CD8-positive, alpha-beta T cell (primary cell): ENCODE measurements at regions of chr2 and their contacts with region 1.

Region 1: GRCh38 chr2:172465417-172466334 is 38.3 kb downstream of the ITGA6 start:
- DNase-seq: peak; percentile 47 to 86 (median 76)
- ATAC-seq: peak; percentile 49
- H3K4me3 ChIP-seq: no peak overlapping the region
- H3K4me3 Mint-ChIP-seq: peak overlapping the region; percentile 6
- H3K27ac ChIP-seq: peak overlapping the region; percentile 24 to 66
- H3K27ac Mint-ChIP-seq: peak overlapping the region; percentile 94
- H3K4me1 ChIP-seq: peaks cover 53% of the 10 kb centered on the region
- H3K4me1 Mint-ChIP-seq: peaks cover 74% of the 10 kb centered on the region
- H3K27me3 ChIP-seq: no peaks in the 10 kb centered on the region
- H3K27me3 Mint-ChIP-seq: no peaks in the 10 kb centered on the region
- CTCF ChIP-seq: peak; percentile 94

Region 2: GRCh38 chr2:170843656-170844055 is 1622.0 kb before region 1 on chr2:
- CTCF ChIA-PET with region 1: no interaction called
- POLR2A ChIA-PET with region 1: no interaction called
- intact Hi-C with region 1: no loop called
- DNase-seq: peak in 2 of 9 experiments; percentile 25 to 40
- ATAC-seq: no peak
- H3K4me3 ChIP-seq: no peak overlapping the region
- H3K4me3 Mint-ChIP-seq: no peak overlapping the region
- H3K27ac ChIP-seq: no peak overlapping the region
- H3K27ac Mint-ChIP-seq: no peak overlapping the region
- H3K4me1 ChIP-seq: peaks cover 10% of the 10 kb centered on the region
- H3K4me1 Mint-ChIP-seq: peaks cover 14% of the 10 kb centered on the region
- H3K27me3 ChIP-seq: no peaks in the 10 kb centered on the region
- H3K27me3 Mint-ChIP-seq: peaks cover 7% of the 10 kb centered on the region
- CTCF ChIP-seq: no peak

Region 3: GRCh38 chr2:171598713-171599319 is 866.9 kb before region 1 on chr2:
- CTCF ChIA-PET with region 1: no interaction called
- POLR2A ChIA-PET with region 1: no interaction called
- intact Hi-C with region 1: loop called in 1 of 2 experiments (anchors 5 kb)
- DNase-seq: peak in 8 of 9 experiments; percentile 9 to 75 (median 48)
- ATAC-seq: peak; percentile 95
- H3K4me3 ChIP-seq: no peak overlapping the region
- H3K4me3 Mint-ChIP-seq: no peak overlapping the region
- H3K27ac ChIP-seq: no peak overlapping the region
- H3K27ac Mint-ChIP-seq: no peak overlapping the region
- H3K4me1 ChIP-seq: peaks cover 4% of the 10 kb centered on the region
- H3K4me1 Mint-ChIP-seq: peaks cover 4% of the 10 kb centered on the region
- H3K27me3 ChIP-seq: no peaks in the 10 kb centered on the region
- H3K27me3 Mint-ChIP-seq: peaks cover 4% of the 10 kb centered on the region
- CTCF ChIP-seq: peak; percentile 82

Region 4: DNA sequence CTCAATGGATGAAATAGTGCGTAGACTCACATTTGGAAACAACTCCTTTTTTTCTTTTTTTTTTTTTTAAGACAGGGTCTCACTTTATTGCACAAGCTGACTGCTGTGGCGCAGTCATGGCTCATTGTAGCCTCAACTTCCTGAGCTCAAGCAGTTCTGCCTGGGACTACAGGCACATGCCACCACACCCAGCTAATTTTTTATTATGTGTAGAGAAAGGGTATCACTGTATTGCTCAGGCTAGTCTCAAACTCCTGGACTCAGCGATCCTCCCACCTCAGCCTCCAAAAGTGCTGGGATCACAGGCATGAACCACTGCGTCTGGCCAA is 526.0 kb before region 1 on chr2:
- CTCF ChIA-PET with region 1: no interaction called
- POLR2A ChIA-PET with region 1: no interaction called
- intact Hi-C with region 1: loop called in 1 of 2 experiments (anchors 5 kb)
- DNase-seq: no peak
- ATAC-seq: no peak
- H3K4me3 ChIP-seq: no peak overlapping the region
- H3K4me3 Mint-ChIP-seq: no peak overlapping the region
- H3K27ac ChIP-seq: no peak overlapping the region
- H3K27ac Mint-ChIP-seq: no peak overlapping the region
- H3K4me1 ChIP-seq: no peaks in the 10 kb centered on the region
- H3K4me1 Mint-ChIP-seq: peaks cover 45% of the 10 kb centered on the region
- H3K27me3 ChIP-seq: no peaks in the 10 kb centered on the region
- H3K27me3 Mint-ChIP-seq: no peaks in the 10 kb centered on the region
- CTCF ChIP-seq: no peak

Region 5: GRCh38 chr2:172179045-172179701 is 286.5 kb before region 1 on chr2:
- CTCF ChIA-PET with region 1: interaction called, 130 read pairs
- POLR2A ChIA-PET with region 1: interaction called, 3 read pairs
- intact Hi-C with region 1: no loop called
- DNase-seq: peak in 2 of 9 experiments; percentile 38 to 49
- ATAC-seq: no peak
- H3K4me3 ChIP-seq: no peak overlapping the region
- H3K4me3 Mint-ChIP-seq: no peak overlapping the region
- H3K27ac ChIP-seq: no peak overlapping the region
- H3K27ac Mint-ChIP-seq: no peak overlapping the region
- H3K4me1 ChIP-seq: peaks cover 5% of the 10 kb centered on the region
- H3K4me1 Mint-ChIP-seq: peaks cover 32% of the 10 kb centered on the region
- H3K27me3 ChIP-seq: no peaks in the 10 kb centered on the region
- H3K27me3 Mint-ChIP-seq: no peaks in the 10 kb centered on the region
- CTCF ChIP-seq: no peak

Region 6: GRCh38 chr2:172285010-172285621 is 180.6 kb before region 1 on chr2:
- CTCF ChIA-PET with region 1: interaction called, 12 read pairs
- POLR2A ChIA-PET with region 1: no interaction called
- intact Hi-C with region 1: no loop called
- DNase-seq: no peak
- ATAC-seq: no peak
- H3K4me3 ChIP-seq: no peak overlapping the region
- H3K4me3 Mint-ChIP-seq: peak overlapping the region; percentile 22
- H3K27ac ChIP-seq: no peak overlapping the region
- H3K27ac Mint-ChIP-seq: no peak overlapping the region
- H3K4me1 ChIP-seq: peaks cover 28% of the 10 kb centered on the region
- H3K4me1 Mint-ChIP-seq: peaks cover 43% of the 10 kb centered on the region
- H3K27me3 ChIP-seq: no peaks in the 10 kb centered on the region
- H3K27me3 Mint-ChIP-seq: no peaks in the 10 kb centered on the region
- CTCF ChIP-seq: no peak

Region 7: DNA sequence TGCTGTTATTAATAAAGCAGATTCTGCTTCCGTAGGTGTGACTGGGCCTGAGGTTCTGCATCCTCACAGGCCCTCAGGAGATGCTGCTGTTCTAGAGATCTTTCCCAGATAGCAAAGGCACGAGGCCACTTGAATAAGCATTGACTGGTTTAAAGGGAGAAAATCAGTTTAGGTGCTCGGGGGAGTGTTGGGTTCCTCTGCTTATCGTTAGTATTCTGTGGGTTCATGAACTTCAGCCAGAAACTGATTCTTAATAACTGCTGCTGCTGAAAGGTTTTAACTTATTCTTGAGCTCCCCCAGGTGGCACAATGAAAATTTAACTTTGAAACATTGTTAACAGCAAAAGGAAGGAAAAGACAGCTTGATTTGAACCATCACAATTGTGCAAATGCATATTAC is 18.6 kb after region 1 on chr2:
- CTCF ChIA-PET with region 1: interaction called, 86 read pairs
- POLR2A ChIA-PET with region 1: no interaction called
- intact Hi-C with region 1: loop called in 1 of 2 experiments (anchors 1 kb)
- DNase-seq: peak in 2 of 9 experiments; percentile 41 to 62
- ATAC-seq: peak; percentile 63
- H3K4me3 ChIP-seq: no peak overlapping the region
- H3K4me3 Mint-ChIP-seq: peak overlapping the region; percentile 15
- H3K27ac ChIP-seq: no peak overlapping the region
- H3K27ac Mint-ChIP-seq: peak overlapping the region; percentile 75
- H3K4me1 ChIP-seq: peaks cover 55% of the 10 kb centered on the region
- H3K4me1 Mint-ChIP-seq: peaks cover 68% of the 10 kb centered on the region
- H3K27me3 ChIP-seq: no peaks in the 10 kb centered on the region
- H3K27me3 Mint-ChIP-seq: no peaks in the 10 kb centered on the region
- CTCF ChIP-seq: peak; percentile 44